Head of caudate nucleus (tissue), 42 donors: ENCODE measurements at regions of chr2 and their contacts with region 1.

Region 1: DNA sequence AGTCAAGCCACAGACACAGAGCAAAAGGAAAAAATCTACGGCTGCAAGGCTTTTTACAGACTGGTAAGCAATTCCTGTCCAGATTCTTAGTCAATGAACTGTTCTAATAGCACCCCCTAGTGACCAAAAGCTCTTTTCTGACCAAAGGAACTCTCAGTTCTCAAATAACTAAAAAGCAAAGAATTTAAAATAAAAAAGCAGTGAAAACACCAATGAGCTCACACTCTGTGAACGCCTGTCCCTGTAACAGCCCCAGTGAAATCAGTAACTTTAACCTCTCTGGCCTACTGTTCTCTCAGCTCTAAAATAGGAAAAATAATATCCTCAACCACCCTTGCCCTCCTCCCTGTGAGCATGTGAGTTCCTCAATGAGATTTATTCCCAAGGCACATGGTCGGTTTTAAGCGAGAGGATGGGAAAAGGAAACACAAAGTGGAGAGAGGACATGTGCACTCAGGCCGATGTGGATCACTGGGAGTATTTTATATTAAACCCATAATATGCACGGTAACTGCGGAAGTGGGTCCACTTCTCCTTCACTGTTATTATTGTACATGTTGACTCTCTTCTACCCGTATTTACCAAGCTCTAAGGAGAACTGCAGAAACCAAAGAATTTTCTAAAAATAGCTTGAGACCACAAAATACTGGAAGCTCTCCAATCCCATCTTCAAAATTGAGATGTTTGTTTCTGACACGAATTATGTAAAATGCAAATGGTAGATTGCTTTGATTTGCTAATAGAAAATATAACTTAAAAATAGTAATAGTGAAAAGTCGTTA is 128.5 kb downstream of the STK39 start:
- DNase-seq: peak in 12 of 42 donors; percentile 12 to 79 (median 54)

Region 2: GRCh38 chr2:167292430-167293171 is 826.3 kb before region 1 on chr2:
- intact Hi-C with region 1: loop called (anchors 10 kb)
- DNase-seq: peak; percentile 74 to 96 (median 92)

Region 3: GRCh38 chr2:167964650-167965413 is 154.1 kb before region 1 on chr2:
- intact Hi-C with region 1: loop called (anchors 5 kb)
- DNase-seq: peak in 1 of 42 donors; percentile 12

Region 4: DNA sequence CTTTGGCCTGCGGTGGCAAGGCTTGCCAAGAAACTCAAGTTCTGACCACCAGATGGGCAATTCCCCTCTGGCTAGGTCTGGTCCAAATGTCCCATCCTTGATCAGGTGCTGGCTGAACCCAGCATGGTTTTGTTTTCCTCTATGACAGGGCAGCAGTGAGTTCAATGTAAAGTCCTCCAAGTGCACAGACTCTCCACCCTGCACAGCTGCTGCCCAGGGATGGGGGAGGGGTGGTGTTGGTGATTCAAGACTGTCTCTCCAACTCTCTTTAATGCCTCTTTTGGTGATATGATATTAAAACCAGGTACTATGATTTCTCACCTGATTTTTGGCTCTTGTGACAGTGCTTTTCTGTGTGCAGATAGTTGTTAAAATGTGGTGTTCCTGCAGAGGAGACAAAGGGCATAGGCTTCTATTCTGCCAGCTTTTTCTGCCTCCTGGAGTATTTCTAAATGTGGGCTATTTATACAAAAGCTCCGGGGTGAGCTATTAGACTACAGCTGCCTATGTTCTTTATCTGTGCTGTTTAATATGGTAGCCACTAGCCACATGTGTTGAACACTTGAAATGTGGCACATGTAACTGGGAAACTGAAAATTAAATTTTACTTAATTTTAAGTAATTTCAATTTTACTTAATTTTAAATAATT is 192.5 kb after region 1 on chr2:
- intact Hi-C with region 1: no loop called
- DNase-seq: no peak